Aorta (tissue), 5 donors: ENCODE measurements at regions of chr9 and their contacts with region 1.

Region 1: DNA sequence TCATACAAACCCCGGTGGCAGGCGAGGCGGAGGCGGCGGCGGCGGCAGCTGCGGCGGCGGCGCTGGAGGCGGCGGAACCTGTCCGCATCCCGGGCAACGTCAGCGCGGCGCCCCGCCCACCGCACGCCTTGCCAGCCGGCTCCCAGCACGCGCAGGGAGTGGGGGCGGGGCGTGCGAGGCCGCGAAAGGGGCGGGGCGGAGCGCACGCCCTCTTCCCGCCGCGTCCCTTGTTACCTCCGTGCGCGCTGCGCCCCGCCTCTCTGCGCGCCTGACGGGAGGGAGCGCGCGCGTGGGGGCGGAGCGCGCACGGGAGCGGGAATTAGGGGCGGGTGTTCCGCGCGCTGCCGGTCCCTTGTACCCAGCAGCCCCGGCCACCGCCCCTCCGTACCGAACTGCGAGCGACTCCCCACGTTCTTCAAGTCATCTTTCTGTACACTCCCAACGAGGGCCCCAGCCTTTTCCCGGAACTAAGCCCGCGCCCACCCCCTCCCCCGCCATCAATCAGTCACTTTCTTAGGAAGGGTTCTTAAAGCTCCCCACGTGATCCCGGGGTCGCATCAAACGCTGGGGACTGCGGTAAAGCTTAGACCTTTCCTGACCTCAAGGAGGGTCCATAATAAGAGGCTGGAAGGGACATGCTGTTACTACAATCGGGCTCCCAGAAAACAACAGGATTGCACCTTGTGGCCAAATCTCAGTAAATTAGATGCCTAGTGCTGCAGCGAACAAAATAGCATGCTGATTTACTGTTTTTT is at the start of gene AGTPBP1:
- DNase-seq: peak; percentile 97 to 99
- ATAC-seq: peak; percentile 98
- H3K4me3 ChIP-seq: peak within 1 kb of the TSS; percentile 38 to 87
- H3K27ac ChIP-seq: peak within 1 kb of the TSS in 1 of 2 donors; percentile 7
- H3K4me1 ChIP-seq: no peaks in the 10 kb centered on the region
- H3K27me3 ChIP-seq: no peaks in the 10 kb centered on the region
- total RNA-seq, gene AGTPBP1: 25.6 to 32.7 TPM

Region 2: GRCh38 chr9:85702726-85703289 is 39.2 kb before region 1 on chr9:
- intact Hi-C with region 1: loop called in 1 of 2 experiments (anchors 5 kb)
- DNase-seq: no peak
- ATAC-seq: no peak
- H3K4me3 ChIP-seq: no peak overlapping the region
- H3K27ac ChIP-seq: no peak overlapping the region
- H3K4me1 ChIP-seq: peaks cover 0 to 7% of the 10 kb centered on the region in 2 donors
- H3K27me3 ChIP-seq: no peaks in the 10 kb centered on the region

Region 3: GRCh38 chr9:85940832-85941621 is 199.0 kb after region 1 on chr9 and contains the start of gene NAA35:
- intact Hi-C with region 1: loop called (anchors 5 kb)
- DNase-seq: peak; percentile 99
- ATAC-seq: peak; percentile 99
- H3K4me3 ChIP-seq: peak within 1 kb of the TSS; percentile 86 to 93
- H3K27ac ChIP-seq: peak within 1 kb of the TSS; percentile 52 to 83
- H3K4me1 ChIP-seq: peaks cover 0 to 11% of the 10 kb centered on the region in 2 donors
- H3K27me3 ChIP-seq: no peaks in the 10 kb centered on the region
- total RNA-seq, gene NAA35: 22.8 to 23.5 TPM